Activated CD8-positive, alpha-beta memory T cell treated with anti-CD3 and anti-CD28 coated beads, Interleukin-2, amount 10 ng/mL, durations not matched to agents 7 days and 5 days (primary cell): ENCODE measurements at regions of chr3 and their contacts with region 1.

Region 1: DNA sequence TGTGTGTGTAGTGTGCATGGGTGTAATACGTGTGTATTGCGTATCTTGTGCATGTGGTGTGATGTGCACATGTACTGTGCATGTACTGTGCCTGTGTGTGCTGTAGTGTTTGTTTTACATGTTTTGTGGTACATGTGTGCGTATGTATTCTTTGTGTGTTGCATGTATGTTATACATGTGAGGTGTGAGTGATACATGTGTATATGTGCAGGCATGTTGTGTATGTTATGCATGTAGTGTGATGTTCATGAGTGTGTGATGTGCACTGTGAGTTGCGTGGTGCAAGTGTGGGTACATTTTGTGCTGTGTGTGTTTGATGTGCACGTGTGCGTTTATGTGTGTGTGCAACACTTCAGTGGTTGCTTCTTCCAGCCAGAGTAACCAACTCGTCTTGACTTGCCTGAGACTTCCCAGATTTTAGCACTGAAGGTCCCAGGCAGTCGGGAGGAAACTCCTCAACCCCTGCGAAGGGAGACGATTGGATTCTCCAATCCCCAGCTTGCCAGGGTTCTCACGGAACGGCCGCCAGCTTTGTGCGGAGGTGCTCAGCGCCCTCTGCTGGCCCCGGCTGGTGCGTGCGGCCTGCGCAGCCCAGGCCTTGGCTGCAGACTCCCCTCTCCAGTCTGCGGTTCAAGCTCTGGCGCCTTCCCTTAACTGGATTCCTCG is 3.6 kb downstream of the GALNT15 start:
- DNase-seq: peak; percentile 70
- ATAC-seq: peak; percentile 85
- H3K4me3 Mint-ChIP-seq: no peak overlapping the region
- H3K27ac Mint-ChIP-seq: no peak overlapping the region
- H3K4me1 Mint-ChIP-seq: peaks cover 2% of the 10 kb centered on the region
- H3K27me3 Mint-ChIP-seq: peaks cover 24% of the 10 kb centered on the region

Region 2: DNA sequence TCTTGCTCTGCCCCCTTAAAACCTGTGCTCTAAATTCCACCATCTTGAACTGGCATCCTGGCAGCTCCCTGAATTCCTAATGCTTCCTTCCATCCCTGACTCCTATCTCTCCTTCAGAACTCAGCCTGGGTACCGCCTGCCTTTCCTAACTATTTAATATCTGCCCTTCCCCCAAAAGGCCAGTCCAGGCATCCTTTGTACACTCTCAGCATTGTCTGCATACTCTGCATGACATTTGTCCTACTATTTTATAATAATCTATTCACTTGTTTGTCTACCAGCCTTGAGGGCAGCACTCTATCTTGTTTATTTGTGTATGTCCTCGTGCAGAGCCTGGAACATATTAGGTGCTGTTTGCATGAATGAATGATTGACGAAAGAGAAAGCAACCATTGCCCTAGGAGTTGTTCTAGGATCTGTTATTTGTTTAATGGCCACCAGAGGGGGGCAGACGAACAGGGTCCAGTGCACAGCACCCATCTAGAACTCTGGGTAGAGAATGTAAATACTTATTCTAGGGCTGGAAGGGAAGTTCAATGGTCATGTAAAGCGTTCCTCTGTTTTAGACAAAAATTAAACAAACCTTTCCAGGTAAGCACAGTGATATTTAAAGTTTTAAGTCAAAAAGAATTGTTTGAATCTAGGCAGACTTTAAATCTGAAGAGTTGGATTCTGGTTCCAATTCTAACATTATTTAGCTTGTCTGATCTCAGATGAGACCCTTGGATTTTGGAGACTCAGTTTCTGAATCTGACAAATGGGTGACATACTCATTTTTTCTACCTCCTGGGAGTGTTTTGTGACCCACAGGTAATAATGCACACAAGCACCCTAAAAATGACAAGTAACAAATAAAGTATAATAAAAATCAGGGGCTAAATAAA is 129.4 kb before region 1 on chr3:
- CTCF ChIA-PET with region 1: interaction called, 35 read pairs
- DNase-seq: peak; percentile 54
- ATAC-seq: peak; percentile 98
- H3K4me3 Mint-ChIP-seq: peak overlapping the region; percentile 62
- H3K27ac Mint-ChIP-seq: no peak overlapping the region
- H3K4me1 Mint-ChIP-seq: peaks cover 6% of the 10 kb centered on the region
- H3K27me3 Mint-ChIP-seq: no peaks in the 10 kb centered on the region